Dendritic cell treated with granulocyte-macrophage colony-stimulating factor and Interleukin-4, amounts not matched to agents 40 ng/mL and 50 ng/mL, for 4 days (primary cell): ENCODE measurements at regions of chr12 and their contacts with region 1.

Region 1: DNA sequence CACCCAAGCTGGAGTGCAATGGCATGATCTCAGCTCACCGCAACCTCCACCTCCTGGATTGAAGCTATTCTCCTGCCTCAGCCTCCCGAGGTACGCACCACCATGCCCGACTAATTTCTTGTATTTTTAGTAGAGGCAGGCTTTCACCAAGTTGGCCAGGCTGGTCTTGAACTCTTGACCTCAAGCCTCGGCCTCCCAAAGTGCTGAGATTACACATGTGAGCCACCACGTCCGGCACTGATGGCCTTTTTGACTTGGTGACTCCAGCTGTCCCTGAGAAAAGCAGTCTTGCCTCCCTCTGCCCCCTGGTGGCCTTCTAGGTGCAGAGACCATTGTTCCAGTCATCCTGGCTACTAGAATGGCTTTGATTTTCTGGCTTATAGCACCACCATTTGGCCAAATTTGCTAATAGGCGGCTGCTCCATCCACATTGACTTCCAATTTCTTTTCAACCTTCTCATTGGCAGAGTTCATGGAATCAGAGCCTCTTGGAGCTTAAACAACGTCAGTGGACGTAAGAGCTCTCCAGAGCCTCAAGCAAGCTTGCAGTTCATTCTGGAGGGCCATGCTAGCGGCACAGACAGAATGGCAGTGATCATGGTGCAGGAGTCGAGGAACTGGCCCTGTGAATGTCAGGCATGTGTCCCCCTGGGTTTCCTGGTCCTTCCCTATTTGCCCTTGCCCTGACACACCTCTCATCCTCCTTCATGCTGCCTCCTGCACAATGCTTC is 25.4 kb upstream of the EIF4B start:
- H3K4me3 Mint-ChIP-seq: no peak overlapping the region
- H3K27ac Mint-ChIP-seq: no peak overlapping the region
- H3K4me1 Mint-ChIP-seq: no peaks in the 10 kb centered on the region
- H3K27me3 Mint-ChIP-seq: peaks cover 21% of the 10 kb centered on the region

Region 2: GRCh38 chr12:52156736-52157565 is 823.9 kb before region 1 on chr12:
- intact Hi-C with region 1: loop called (anchors 10 kb)
- H3K4me3 Mint-ChIP-seq: no peak overlapping the region
- H3K27ac Mint-ChIP-seq: no peak overlapping the region
- H3K4me1 Mint-ChIP-seq: peaks cover 2% of the 10 kb centered on the region
- H3K27me3 Mint-ChIP-seq: peaks cover 15% of the 10 kb centered on the region

Region 3: DNA sequence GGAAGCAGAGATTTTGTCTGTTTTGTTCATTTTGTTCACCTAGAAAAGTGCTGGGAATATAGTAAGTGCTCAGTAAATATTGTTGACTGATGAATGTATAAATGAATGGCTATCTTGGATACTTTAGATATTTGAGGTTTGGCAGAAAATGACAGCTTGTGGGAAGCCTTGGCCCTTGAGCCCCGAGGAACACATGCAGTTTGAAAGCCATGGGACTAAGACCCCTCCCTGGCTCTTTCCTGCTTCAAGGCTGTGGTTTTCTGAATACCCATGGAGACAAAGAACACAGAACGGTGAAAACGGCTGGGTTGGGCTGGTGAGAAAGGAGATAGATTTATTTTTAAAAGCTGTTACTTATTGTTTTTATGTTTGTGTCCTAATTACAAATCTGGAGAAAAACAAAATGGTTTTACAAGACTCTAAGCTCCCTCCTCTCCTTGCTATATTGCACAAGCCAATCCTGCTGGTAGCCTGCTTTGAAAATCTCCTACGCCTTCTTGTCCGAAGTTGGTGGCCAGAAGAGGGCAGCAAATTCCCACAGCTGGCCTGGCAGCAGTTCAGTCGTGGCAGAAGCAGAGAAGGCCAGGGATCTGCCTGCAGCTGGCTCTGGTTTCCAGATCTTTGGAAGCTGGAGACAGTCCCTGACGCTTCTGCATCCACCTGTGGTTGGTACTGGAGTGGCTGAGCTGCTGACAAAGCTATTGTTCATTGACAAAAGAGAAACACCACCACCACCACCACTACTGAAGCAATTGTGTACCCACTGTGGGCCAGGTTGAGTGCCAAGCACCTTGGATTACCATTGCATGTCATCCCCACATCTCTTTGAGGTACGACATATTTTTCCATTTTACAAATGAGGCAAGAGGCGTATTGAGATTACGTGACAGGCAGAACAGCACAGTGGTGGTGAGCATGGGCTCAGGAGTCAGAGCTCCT is 608.4 kb before region 1 on chr12:
- intact Hi-C with region 1: loop called (anchors 5 kb)
- H3K4me3 Mint-ChIP-seq: no peak overlapping the region
- H3K27ac Mint-ChIP-seq: no peak overlapping the region
- H3K4me1 Mint-ChIP-seq: no peaks in the 10 kb centered on the region
- H3K27me3 Mint-ChIP-seq: peaks cover 9% of the 10 kb centered on the region

Region 4: GRCh38 chr12:52582971-52583456 is 397.8 kb before region 1 on chr12:
- intact Hi-C with region 1: loop called (anchors 5 kb)
- H3K4me3 Mint-ChIP-seq: no peak overlapping the region
- H3K27ac Mint-ChIP-seq: no peak overlapping the region
- H3K4me1 Mint-ChIP-seq: peaks cover 8% of the 10 kb centered on the region
- H3K27me3 Mint-ChIP-seq: peaks cover 17% of the 10 kb centered on the region

Region 5: DNA sequence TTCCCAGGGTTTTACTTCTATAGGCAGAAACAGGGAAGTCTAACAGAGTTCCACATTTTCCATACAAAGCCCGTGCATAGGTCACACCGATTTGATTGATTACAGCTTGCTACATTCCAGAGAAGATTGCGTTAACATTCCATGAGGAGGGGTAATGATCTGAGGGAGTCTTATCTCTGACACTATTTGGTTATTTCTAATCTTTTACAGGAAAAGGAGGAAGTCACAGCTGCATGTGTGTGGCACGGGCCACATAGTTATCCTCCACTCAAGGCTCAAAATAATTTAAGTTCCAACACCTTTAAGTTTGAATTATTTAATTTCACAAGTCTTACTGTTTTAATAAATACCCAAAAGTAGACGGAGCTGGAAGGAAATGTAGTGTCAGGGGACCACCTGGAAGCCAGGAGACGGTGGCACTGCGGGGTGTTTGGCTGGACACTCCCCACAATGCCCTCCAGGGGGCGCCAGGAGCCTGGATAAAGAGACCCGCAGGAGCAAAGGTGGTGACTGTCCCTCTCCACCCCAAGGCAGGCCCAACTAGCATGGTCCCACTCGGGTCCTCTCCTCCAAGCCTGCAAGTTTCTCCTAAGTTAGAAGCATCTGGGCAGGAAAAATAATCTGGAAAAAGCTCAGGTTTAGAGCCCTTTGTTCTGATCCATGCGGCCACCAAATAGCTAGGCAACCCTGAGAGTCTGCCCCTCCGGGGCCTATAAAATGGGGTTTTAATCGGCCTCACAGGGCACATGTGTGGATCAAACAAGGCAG is 96.1 kb before region 1 on chr12:
- intact Hi-C with region 1: loop called (anchors 1 kb)
- H3K4me3 Mint-ChIP-seq: no peak overlapping the region
- H3K27ac Mint-ChIP-seq: no peak overlapping the region
- H3K4me1 Mint-ChIP-seq: peaks cover 19% of the 10 kb centered on the region
- H3K27me3 Mint-ChIP-seq: peaks cover 19% of the 10 kb centered on the region

Region 6: DNA sequence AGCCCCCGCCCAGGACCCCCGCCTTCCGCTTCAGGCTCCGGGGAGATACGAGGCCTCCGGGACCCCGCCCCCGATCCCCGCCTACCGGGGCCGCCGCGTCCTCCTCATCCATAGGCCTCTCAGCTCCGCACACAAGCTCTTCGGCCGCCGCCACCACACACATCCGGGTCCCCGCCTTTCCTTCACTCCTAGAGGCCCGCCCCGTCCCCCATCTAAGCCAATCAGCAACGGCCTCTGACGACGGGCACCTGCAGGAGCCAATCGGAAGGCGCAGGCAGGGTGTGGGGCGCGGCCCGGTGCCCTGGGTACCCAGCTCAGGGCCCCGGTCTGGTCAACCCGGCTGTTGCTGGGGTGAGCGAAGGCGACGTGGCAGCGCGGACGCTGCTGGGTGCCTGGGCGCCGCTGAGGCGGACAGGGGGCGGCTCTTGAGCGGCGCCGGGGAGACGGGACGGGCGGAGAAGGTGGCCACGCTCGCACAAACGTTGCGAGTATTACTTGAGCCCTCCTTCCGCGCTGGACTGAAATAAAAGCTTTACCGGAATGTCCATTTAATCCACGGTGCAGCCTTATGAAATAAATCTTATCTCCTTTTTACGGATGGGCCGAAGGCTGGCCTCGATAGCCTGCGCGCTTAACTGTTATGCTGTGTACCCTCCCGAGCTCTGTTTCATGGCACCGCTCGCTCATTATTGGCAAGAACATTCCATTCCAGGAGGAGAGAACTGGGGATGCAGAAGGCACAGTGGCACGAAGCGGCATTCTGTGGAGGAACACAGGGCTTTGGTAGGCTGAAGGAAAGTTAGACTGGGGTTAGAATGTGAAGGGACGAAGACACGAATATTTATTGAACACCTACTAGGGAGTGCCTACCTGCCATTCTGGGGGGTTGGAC is 98.6 kb after region 1 on chr12 and contains the start of gene SPRYD3:
- intact Hi-C with region 1: no loop called
- H3K4me3 Mint-ChIP-seq: peak within 1 kb of the TSS; percentile 80
- H3K27ac Mint-ChIP-seq: peak within 1 kb of the TSS; percentile 93
- H3K4me1 Mint-ChIP-seq: peaks cover 52% of the 10 kb centered on the region
- H3K27me3 Mint-ChIP-seq: peaks cover 9% of the 10 kb centered on the region